ENCODE measurements at regions of chr9 and their contacts with region 1.

Region 1: DNA sequence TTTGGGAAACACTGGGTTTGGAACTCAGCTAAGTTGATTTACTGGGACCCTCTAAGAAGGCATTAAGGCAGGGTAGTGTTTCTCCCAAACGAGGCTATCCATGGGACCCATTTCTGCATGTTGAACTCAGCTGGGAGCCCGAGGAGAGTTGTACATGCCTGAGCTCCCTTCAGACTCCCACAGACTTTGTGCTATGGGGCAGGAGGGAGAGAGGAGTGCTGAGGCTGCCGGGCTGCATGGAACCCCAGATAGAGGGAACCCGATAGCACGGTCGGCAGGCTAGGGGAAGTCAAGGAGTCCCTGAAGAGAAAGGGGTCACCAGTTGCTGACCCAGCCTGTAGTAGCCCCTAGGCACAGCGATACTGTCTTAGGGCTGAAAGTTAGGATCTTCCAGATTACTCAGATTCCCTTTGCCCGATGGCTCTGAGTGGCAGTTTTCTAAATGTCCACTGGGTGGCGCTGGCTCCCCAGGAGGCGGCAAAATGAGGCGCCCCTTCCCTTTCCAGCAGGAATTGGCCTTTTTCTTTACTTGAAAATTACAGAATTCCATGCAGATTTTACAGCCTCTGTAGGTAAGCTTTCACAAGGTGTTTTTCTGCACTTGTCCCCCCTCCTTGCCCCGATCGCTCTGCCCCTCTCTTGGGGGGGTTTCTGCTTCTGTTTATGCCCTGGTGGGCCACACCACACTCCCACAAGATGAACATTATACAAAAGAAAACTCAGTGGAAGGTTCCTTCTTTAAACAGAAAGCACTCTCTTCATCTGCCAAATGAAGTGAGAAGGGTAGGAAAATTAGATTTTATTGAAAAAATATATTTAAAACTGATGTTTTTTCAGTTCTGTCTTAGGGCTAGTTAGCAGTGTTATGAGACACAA is 17.8 kb downstream of the NANS start:
- DNase-seq: peak; percentile 45 to 92
- H3K4me3 ChIP-seq: no peak overlapping the region
- CTCF ChIP-seq: peak in 1 of 3 donors; percentile 67
- POLR2A ChIP-seq: no peak

Region 2: GRCh38 chr9:98207606-98208005 is 133.3 kb after region 1 on chr9:
- intact Hi-C with region 1: loop called (anchors 10 kb)
- DNase-seq: no peak
- H3K4me3 ChIP-seq: no peak overlapping the region
- CTCF ChIP-seq: no peak
- POLR2A ChIP-seq: no peak

Region 3: GRCh38 chr9:98255578-98256296 is 181.4 kb after region 1 on chr9 and contains the start of gene TBC1D2:
- intact Hi-C with region 1: loop called (anchors 10 kb)
- DNase-seq: peak; percentile 96 to 99
- H3K4me3 ChIP-seq: peak within 1 kb of the TSS; percentile 82
- CTCF ChIP-seq: no peak
- POLR2A ChIP-seq: no peak
- total RNA-seq, gene TBC1D2: 35.4 to 56.3 (median 45.9) TPM

Measured in lower leg skin (tissue), 4 donors.